Gastrocnemius medialis (tissue), 4 donors: ENCODE measurements at regions of chr20 and their contacts with region 1.

Region 1: GRCh38 chr20:63537525-63538203 is 488 bp upstream of the PTK6 start:
- DNase-seq: peak; percentile 54 to 68
- ATAC-seq: peak; percentile 81 to 88
- H3K4me3 ChIP-seq: peak overlapping the region in 3 of 4 donors; percentile 9 to 40 (median 17)
- H3K27ac ChIP-seq: peak overlapping the region in 1 of 4 donors; percentile 23
- H3K4me1 ChIP-seq: peaks cover 0 to 4% of the 10 kb centered on the region in 2 donors
- H3K27me3 ChIP-seq: peaks cover 28 to 38% (median 33%) of the 10 kb centered on the region in 3 donors
- CTCF ChIP-seq: peak; percentile 88 to 98 (median 96)
- POLR2A ChIP-seq: peak in 1 of 2 donors; percentile 6

Region 2: DNA sequence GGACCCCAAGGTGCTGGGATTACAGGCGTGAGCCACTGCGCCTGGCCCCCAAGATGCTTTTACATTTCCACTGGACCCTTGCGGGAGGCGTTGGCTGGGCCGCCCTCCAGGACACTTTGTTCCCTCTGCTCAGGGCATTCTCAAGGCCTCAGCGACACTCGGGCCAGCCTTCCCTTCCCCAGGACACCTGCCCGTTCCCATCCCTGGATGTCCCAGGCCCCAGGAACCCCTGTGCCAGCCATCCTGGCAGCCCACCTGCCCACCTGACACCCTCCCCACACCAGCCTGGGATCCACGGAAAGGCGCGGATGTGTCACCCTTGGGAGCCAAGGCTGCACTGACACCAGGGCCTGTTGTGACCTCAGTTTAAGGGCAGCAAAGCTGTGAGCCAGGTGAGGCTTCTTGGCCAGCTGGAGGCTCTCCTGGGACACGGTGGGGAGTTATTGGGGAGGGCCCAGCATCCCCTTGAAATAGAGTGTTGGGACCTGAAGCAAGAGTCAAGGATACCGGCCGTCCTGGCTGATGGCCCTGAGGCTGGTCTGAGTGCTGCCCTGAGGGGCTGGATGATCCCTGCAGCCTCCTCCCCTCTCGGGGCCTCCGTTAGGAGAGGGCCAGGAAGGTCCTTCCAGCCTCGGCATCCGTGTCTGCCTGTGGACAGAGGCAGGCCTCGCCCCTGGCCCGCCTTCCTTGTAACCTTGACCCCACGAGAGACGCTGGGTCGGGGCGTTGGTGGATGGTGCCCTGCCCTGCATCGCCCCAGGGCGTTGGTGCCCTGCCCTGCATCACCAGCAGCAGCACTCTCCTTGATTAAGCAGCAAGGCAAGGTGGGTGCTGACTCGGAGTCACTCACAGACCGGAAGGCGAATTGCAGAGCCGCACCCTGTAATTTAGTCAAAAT is 446.7 kb before region 1 on chr20:
- in situ Hi-C with region 1: no loop called
- intact Hi-C with region 1: no loop called
- DNase-seq: peak in 1 of 2 donors; percentile 1
- ATAC-seq: no peak
- H3K4me3 ChIP-seq: no peak overlapping the region
- H3K27ac ChIP-seq: no peak overlapping the region
- H3K4me1 ChIP-seq: no peaks in the 10 kb centered on the region
- H3K27me3 ChIP-seq: peaks cover 10 to 35% (median 16%) of the 10 kb centered on the region in 3 donors
- CTCF ChIP-seq: no peak
- POLR2A ChIP-seq: no peak

Region 3: DNA sequence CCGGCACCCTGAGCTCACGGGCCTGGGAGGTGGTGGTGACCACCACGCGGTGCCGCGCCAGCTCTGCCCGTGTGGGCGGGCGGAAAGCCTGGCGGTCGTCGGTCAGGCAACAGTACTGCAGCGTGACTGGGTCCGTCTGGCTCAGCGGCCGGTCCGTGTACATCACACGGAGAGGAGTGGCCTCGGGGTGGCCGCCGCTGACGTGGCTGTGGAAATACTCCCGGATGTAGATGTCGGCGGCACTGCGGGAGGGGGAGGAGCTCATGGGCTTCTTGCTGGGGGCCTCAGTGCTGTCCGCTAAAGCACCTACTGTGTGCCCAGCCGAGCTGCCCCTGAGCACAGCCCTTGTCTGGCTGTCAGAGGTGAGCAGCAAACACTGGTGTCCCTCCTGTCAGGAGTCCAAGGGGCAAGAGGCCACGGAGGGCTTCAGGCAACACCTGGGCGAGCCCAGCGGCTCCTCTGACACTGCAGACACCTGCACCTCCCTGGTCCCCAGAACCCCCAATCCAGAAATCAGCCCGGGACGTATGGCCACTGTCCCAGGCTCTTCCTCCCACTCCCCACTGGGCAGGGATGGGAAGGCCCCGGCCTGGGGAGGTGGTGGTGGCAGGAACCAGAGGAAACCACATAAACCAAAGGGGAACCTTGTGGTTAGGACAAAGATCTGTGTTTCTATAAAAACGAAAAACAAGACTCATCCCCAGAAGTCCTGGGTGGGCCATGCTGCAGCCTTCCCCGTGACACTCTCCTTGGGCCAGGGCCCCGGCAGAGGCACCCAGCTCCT is 29.9 kb after region 1 on chr20:
- in situ Hi-C with region 1: no loop called
- intact Hi-C with region 1: no loop called
- DNase-seq: no peak
- ATAC-seq: no peak
- H3K4me3 ChIP-seq: no peak overlapping the region
- H3K27ac ChIP-seq: no peak overlapping the region
- H3K4me1 ChIP-seq: no peaks in the 10 kb centered on the region
- H3K27me3 ChIP-seq: peaks cover 0 to 2% (median 0%) of the 10 kb centered on the region in 3 donors
- CTCF ChIP-seq: no peak
- POLR2A ChIP-seq: no peak

Region 4: DNA sequence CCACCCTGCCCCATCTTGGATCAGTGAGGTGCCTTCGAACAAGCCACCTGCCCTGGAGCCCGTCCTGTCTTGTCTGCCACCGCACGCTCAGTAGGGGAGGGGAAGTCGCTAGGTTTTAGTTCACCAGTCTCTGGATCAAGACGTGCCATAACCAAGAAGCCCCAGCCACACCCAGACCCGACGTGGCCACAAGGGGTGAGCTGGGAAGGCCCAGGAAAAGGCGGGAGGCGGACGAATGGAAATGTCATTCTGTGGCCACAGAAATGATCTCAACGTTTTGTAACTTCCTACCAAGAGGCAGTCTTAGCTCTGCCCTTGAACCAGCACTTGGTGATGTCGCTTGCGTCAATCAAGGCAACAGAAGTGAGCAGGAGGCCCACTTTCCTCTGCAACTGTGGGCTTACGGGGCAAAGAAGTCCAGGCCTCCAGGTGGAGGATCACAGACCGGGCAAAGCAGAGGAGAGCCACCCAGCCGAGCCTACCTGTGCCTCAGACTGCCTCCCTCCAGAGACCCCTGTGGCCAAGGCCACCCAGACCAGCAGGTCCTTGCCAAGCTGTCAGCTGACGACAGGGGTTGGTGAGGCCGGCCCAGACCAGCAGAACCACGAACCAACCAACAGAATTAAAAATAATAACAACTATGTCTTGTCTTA is 74.7 kb after region 1 on chr20:
- in situ Hi-C with region 1: no loop called
- intact Hi-C with region 1: loop called (anchors 5 kb)
- DNase-seq: no peak
- ATAC-seq: no peak
- H3K4me3 ChIP-seq: no peak overlapping the region
- H3K27ac ChIP-seq: no peak overlapping the region
- H3K4me1 ChIP-seq: peaks cover 0 to 4% of the 10 kb centered on the region in 2 donors
- H3K27me3 ChIP-seq: no peaks in the 10 kb centered on the region
- CTCF ChIP-seq: no peak
- POLR2A ChIP-seq: no peak

Region 5: GRCh38 chr20:63791497-63792156 is 254.0 kb after region 1 on chr20:
- in situ Hi-C with region 1: no loop called
- intact Hi-C with region 1: loop called (anchors 2 kb)
- DNase-seq: no peak
- ATAC-seq: peak in 1 of 2 donors; percentile 9
- H3K4me3 ChIP-seq: no peak overlapping the region
- H3K27ac ChIP-seq: peak overlapping the region in 3 of 4 donors; percentile 45 to 61 (median 45)
- H3K4me1 ChIP-seq: peaks cover 0 to 7% of the 10 kb centered on the region in 2 donors
- H3K27me3 ChIP-seq: no peaks in the 10 kb centered on the region
- CTCF ChIP-seq: no peak
- POLR2A ChIP-seq: no peak

Region 6: GRCh38 chr20:63973636-63974402 is 436.2 kb after region 1 on chr20:
- in situ Hi-C with region 1: no loop called
- intact Hi-C with region 1: loop called (anchors 1 kb)
- DNase-seq: peak; percentile 69 to 76
- ATAC-seq: peak; percentile 73 to 74
- H3K4me3 ChIP-seq: peak overlapping the region; percentile 39 to 53 (median 46)
- H3K27ac ChIP-seq: peak overlapping the region; percentile 59 to 71 (median 62)
- H3K4me1 ChIP-seq: peaks cover 4 to 26% of the 10 kb centered on the region in 2 donors
- H3K27me3 ChIP-seq: peaks cover 0 to 8% (median 4%) of the 10 kb centered on the region in 3 donors
- CTCF ChIP-seq: peak; percentile 96 to 100 (median 97)
- POLR2A ChIP-seq: peak in 1 of 2 donors; percentile 35